SK-N-SH (cell line): ENCODE measurements at regions of chr10 and their contacts with region 1.

Region 1: DNA sequence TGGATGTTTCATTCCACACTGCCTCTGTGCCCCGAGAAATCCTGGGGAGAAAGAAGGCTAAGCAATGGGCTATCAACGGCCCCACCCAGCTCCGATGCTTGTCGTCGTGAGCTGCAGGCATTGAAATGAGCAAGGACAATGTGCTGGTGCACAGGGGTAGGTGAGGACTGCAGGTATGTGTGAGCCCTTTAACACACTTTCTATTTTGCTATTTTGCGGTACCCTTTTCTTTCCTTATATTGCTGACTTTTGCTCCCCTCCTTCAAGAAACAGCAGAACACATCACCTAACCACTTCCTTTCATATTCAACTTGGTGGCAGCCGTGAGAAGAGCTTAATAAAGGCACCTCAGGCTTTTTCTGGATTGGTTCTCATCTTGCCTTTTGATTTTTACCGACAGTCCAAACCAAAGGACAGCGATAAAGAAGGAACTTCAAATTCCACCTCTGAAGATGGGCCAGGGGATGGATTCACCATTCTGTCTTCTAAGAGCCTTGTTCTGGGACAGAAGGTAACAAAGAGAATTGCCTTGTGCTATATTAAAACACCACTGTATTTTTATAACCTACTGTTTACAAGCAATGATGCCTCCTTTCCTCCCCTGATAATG is 39.2 kb downstream of the AIFM2 start:
- DNase-seq: no peak
- H3K4me3 ChIP-seq: no peak overlapping the region
- H3K27ac ChIP-seq: no peak overlapping the region
- H3K4me1 ChIP-seq: no peaks in the 10 kb centered on the region
- H3K27me3 ChIP-seq: no peaks in the 10 kb centered on the region
- CTCF ChIP-seq: no peak
- EP300 ChIP-seq: no peak
- RAD21 ChIP-seq: no peak

Region 2: GRCh38 chr10:69807122-69807521 is 286.3 kb before region 1 on chr10:
- CTCF ChIA-PET with region 1: no interaction called
- POLR2A ChIA-PET with region 1: no interaction called
- DNase-seq: no peak
- H3K4me3 ChIP-seq: no peak overlapping the region
- H3K27ac ChIP-seq: peak overlapping the region in 1 of 2 experiments; percentile 51; a peak in 2 of 4 replicates
- H3K4me1 ChIP-seq: peaks cover 15 to 22% of the 10 kb centered on the region in 2 experiments; a peak in 3 of 4 replicates
- H3K27me3 ChIP-seq: no peaks in the 10 kb centered on the region
- CTCF ChIP-seq: no peak
- EP300 ChIP-seq: no peak
- RAD21 ChIP-seq: no peak

Region 3: GRCh38 chr10:70074165-70074564 is 19.3 kb before region 1 on chr10:
- CTCF ChIA-PET with region 1: no interaction called
- POLR2A ChIA-PET with region 1: no interaction called
- DNase-seq: no peak
- H3K4me3 ChIP-seq: no peak overlapping the region
- H3K27ac ChIP-seq: no peak overlapping the region
- H3K4me1 ChIP-seq: peaks cover 0 to 4% of the 10 kb centered on the region in 2 experiments; a peak in 1 of 4 replicates
- H3K27me3 ChIP-seq: no peaks in the 10 kb centered on the region
- CTCF ChIP-seq: no peak
- EP300 ChIP-seq: no peak
- RAD21 ChIP-seq: no peak

Region 4: GRCh38 chr10:70106958-70107791 is 13.7 kb after region 1 on chr10:
- CTCF ChIA-PET with region 1: interaction called, 11 read pairs
- POLR2A ChIA-PET with region 1: no interaction called
- DNase-seq: peak; percentile 67
- H3K4me3 ChIP-seq: no peak overlapping the region
- H3K27ac ChIP-seq: no peak overlapping the region
- H3K4me1 ChIP-seq: no peaks in the 10 kb centered on the region; a peak in 1 of 4 replicates
- H3K27me3 ChIP-seq: no peaks in the 10 kb centered on the region
- CTCF ChIP-seq: peak; percentile 55
- EP300 ChIP-seq: no peak
- RAD21 ChIP-seq: peak; percentile 24